ENCODE measurements at regions of chr14 and their contacts with region 1.

Region 1: GRCh38 chr14:55051426-55052268 is at the start of gene MAPK1IP1L:
- DNase-seq: peak; percentile 92
- ATAC-seq: peak; percentile 94
- H3K4me3 Mint-ChIP-seq: peak within 1 kb of the TSS; percentile 85
- H3K27ac Mint-ChIP-seq: peak within 1 kb of the TSS; percentile 95
- H3K4me1 Mint-ChIP-seq: peaks cover 38% of the 10 kb centered on the region
- H3K27me3 Mint-ChIP-seq: no peaks in the 10 kb centered on the region
- total RNA-seq, gene MAPK1IP1L: 90.2 to 110 TPM

Region 2: DNA sequence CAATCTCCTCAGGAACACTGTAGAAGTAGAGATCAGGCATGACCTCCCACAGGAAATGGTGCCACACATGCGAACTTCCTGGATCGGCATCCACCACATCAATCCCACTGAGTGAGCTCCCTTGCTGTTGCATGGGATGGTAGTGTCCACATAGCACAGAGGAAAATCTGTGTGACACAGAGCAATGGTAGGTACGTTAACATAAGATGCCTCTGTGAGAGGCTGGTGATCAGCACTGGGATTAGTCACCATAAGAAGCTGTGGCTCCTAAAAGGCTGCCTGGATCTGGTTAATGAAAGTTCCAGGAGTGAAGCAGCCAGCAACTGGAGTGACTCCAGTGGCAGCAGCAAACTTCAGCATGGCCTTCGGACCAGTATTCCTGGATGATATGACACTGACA is 46.6 kb before region 1 on chr14:
- CTCF ChIA-PET with region 1: no interaction called
- DNase-seq: no peak
- ATAC-seq: no peak
- H3K4me3 Mint-ChIP-seq: no peak overlapping the region
- H3K27ac Mint-ChIP-seq: no peak overlapping the region
- H3K4me1 Mint-ChIP-seq: peaks cover 4% of the 10 kb centered on the region
- H3K27me3 Mint-ChIP-seq: no peaks in the 10 kb centered on the region

Region 3: GRCh38 chr14:55026793-55027561 is 24.7 kb before region 1 on chr14 and contains the starts of genes SOCS4 and WDHD1:
- CTCF ChIA-PET with region 1: interaction called, 43 read pairs
- DNase-seq: peak; percentile 98
- ATAC-seq: peak; percentile 94
- H3K4me3 Mint-ChIP-seq: peak within 1 kb of the TSS; percentile 95
- H3K27ac Mint-ChIP-seq: peak within 1 kb of the TSS; percentile 95
- H3K4me1 Mint-ChIP-seq: peaks cover 54% of the 10 kb centered on the region
- H3K27me3 Mint-ChIP-seq: no peaks in the 10 kb centered on the region
- total RNA-seq, gene SOCS4: 35.3 to 41.9 TPM
- total RNA-seq, gene WDHD1: 57.4 to 57.7 TPM

Region 4: DNA sequence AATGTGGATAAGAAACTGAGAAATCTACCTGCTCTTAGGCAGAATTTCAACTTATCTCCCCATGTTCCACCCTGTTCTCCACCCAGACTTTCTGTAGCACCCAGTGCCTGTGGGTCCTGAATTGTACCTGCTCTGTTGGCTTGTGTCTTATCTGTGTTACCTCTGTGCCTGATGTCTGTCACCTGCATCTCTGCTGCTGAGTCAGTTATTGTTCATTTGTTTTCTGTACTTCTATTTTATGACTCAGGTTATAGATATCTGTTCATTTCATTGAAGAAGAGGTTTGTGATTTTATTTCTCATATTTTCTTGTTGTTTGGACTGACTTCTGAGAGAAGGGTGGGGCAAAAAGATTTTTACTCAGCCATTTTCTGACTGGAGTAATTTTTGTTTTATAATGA is 12.9 kb before region 1 on chr14:
- CTCF ChIA-PET with region 1: interaction called, 17 read pairs
- DNase-seq: no peak
- ATAC-seq: no peak
- H3K4me3 Mint-ChIP-seq: no peak overlapping the region
- H3K27ac Mint-ChIP-seq: no peak overlapping the region
- H3K4me1 Mint-ChIP-seq: peaks cover 1% of the 10 kb centered on the region
- H3K27me3 Mint-ChIP-seq: no peaks in the 10 kb centered on the region

Region 5: GRCh38 chr14:55071870-55072640 is 20.4 kb after region 1 on chr14:
- CTCF ChIA-PET with region 1: interaction called, 24 read pairs
- DNase-seq: peak; percentile 52
- ATAC-seq: peak; percentile 70
- H3K4me3 Mint-ChIP-seq: peak overlapping the region; percentile 36
- H3K27ac Mint-ChIP-seq: peak overlapping the region; percentile 77
- H3K4me1 Mint-ChIP-seq: peaks cover 42% of the 10 kb centered on the region
- H3K27me3 Mint-ChIP-seq: no peaks in the 10 kb centered on the region

Region 6: DNA sequence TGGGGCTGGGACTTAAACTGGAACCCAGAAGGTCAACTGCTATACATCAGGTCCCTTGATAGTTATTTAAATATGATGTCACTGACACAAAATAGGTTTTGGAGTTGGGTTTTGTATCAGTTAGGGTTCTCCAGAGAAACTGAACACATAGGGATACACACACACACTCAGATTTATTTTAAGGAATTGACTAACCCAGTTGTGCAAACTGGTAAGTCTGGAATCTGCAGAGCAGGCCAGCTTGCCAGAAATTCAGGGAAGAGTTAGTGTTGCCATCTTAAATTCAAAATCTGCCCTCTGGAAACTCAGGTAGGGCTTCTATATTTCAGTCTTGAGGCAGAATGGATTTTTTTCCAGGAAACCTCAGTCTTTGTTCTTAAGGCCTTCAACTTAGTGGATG is 36.7 kb after region 1 on chr14:
- CTCF ChIA-PET with region 1: interaction called, 15 read pairs
- DNase-seq: no peak
- ATAC-seq: no peak
- H3K4me3 Mint-ChIP-seq: no peak overlapping the region
- H3K27ac Mint-ChIP-seq: no peak overlapping the region
- H3K4me1 Mint-ChIP-seq: peaks cover 32% of the 10 kb centered on the region
- H3K27me3 Mint-ChIP-seq: no peaks in the 10 kb centered on the region

Region 7: GRCh38 chr14:55094321-55095157 is 42.9 kb after region 1 on chr14:
- CTCF ChIA-PET with region 1: interaction called, 15 read pairs
- DNase-seq: no peak
- ATAC-seq: no peak
- H3K4me3 Mint-ChIP-seq: no peak overlapping the region
- H3K27ac Mint-ChIP-seq: no peak overlapping the region
- H3K4me1 Mint-ChIP-seq: peaks cover 62% of the 10 kb centered on the region
- H3K27me3 Mint-ChIP-seq: no peaks in the 10 kb centered on the region

Region 8: GRCh38 chr14:55146425-55146824 is 94.8 kb after region 1 on chr14:
- CTCF ChIA-PET with region 1: interaction called, 14 read pairs
- DNase-seq: no peak
- ATAC-seq: no peak
- H3K4me3 Mint-ChIP-seq: no peak overlapping the region
- H3K27ac Mint-ChIP-seq: no peak overlapping the region
- H3K4me1 Mint-ChIP-seq: peaks cover 44% of the 10 kb centered on the region
- H3K27me3 Mint-ChIP-seq: no peaks in the 10 kb centered on the region

Measured in activated CD8-positive, alpha-beta memory T cell treated with anti-CD3 and anti-CD28 coated beads, Interleukin-2, amount 10 ng/mL, durations not matched to agents 7 days and 5 days (primary cell).